ENCODE measurements at regions of chr11 and their contacts with region 1.

Region 1: DNA sequence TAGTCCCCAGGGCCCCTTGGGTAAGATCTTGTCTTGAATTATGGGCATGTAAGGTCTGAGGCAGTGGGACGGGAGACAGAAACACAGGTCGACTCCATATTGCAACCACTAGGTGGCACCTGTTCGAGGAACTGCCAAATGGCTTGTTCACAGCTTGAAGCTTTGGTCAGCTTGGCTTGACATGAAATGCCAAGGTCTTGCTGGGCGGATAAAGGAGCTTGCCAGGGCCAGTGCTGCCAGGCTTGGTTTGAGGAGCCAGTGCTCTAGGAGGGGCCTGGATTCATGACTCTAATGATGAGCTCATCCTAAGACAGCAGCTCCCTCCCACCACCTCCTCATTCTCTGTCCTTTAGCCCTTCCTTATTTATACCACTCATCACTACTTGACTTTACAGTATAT is 11.9 kb upstream of the NRIP3 start:
- DNase-seq: peak; percentile 50 to 64
- H3K4me3 ChIP-seq: no peak overlapping the region
- H3K27ac ChIP-seq: no peak overlapping the region
- H3K4me1 ChIP-seq: no peaks in the 10 kb centered on the region
- H3K27me3 ChIP-seq: no peaks in the 10 kb centered on the region
- CTCF ChIP-seq: peak; percentile 87 to 96 (median 90)
- EP300 ChIP-seq: no peak
- POLR2A ChIP-seq: no peak
- RAD21 ChIP-seq: peak; percentile 79 to 88

Region 2: GRCh38 chr11:8799273-8799672 is 216.4 kb before region 1 on chr11:
- CTCF ChIA-PET with region 1: no interaction called
- POLR2A ChIA-PET with region 1: no interaction called
- DNase-seq: no peak
- H3K4me3 ChIP-seq: no peak overlapping the region
- H3K27ac ChIP-seq: no peak overlapping the region
- H3K4me1 ChIP-seq: peaks cover 0 to 4% (median 0%) of the 10 kb centered on the region in 4 experiments; a peak in 3 of 7 replicates
- H3K27me3 ChIP-seq: no peaks in the 10 kb centered on the region
- CTCF ChIP-seq: no peak
- EP300 ChIP-seq: no peak
- POLR2A ChIP-seq: no peak
- RAD21 ChIP-seq: no peak

Region 3: DNA sequence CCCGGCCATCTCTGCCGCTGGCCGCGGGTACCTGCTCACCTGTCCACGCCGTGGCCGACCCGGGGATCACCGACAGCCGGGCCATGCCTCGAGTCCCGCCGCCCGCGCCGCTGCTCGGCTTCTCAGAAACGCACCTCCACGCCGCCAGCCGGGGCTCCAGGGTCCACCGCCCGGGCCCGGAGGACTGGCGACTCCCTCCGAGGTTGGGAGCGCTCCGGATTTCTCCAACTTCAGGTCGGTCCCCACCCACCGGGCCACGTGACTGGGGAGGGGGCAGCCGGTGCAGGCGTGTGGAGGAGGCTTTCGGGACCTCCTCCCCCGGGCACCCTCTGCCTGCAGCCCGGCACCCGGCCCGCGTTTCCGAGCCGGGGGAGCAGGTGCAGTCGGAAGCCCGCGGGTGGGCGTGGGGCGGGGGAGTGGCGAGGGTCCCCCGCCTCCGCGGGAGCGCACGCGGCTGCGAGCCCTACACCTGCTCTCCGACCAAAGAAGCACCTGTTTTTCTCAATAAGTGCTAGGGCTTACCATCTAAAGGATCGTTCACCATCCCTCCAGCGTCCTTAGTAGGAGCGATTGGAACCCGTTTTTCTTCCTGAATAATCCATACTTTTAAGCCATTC is 11.3 kb before region 1 on chr11:
- CTCF ChIA-PET with region 1: interaction called, 26 read pairs
- POLR2A ChIA-PET with region 1: interaction called, 5 read pairs
- DNase-seq: peak in 1 of 2 experiments; percentile 81
- H3K4me3 ChIP-seq: peak overlapping the region; percentile 45 to 67 (median 48)
- H3K27ac ChIP-seq: no peak overlapping the region
- H3K4me1 ChIP-seq: peaks cover 0 to 8% (median 6%) of the 10 kb centered on the region in 4 experiments; a peak in 6 of 7 replicates
- H3K27me3 ChIP-seq: peaks cover 20 to 57% (median 50%) of the 10 kb centered on the region in 4 experiments
- CTCF ChIP-seq: no peak
- EP300 ChIP-seq: no peak
- POLR2A ChIP-seq: no peak
- RAD21 ChIP-seq: no peak

Region 4: GRCh38 chr11:9042488-9042887 is 26.8 kb after region 1 on chr11:
- CTCF ChIA-PET with region 1: interaction called, 15 read pairs
- POLR2A ChIA-PET with region 1: no interaction called
- DNase-seq: no peak
- H3K4me3 ChIP-seq: no peak overlapping the region
- H3K27ac ChIP-seq: no peak overlapping the region
- H3K4me1 ChIP-seq: peaks cover 0 to 9% (median 2%) of the 10 kb centered on the region in 4 experiments; a peak in 5 of 7 replicates
- H3K27me3 ChIP-seq: no peaks in the 10 kb centered on the region
- CTCF ChIP-seq: no peak
- EP300 ChIP-seq: no peak
- POLR2A ChIP-seq: no peak
- RAD21 ChIP-seq: no peak

Region 5: DNA sequence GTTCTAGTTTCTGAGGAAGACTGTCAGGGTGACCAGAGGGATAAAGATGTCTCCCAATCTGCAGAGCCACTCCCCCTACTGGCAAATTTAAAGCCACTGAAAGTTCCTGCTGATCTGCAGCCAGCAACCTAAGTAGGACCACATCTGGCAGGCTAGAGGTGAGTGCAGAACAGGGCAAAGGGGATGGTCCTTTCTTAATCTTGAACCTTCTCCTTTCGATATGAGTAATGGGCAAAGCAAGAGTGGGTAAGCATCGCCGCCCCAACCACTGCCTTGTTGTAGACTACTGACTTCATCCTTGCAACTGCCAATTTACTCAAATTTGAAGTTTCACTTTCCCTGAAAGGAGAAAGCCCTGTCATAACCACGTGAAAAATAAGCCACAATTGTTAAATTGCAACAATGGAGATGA is 45.0 kb after region 1 on chr11:
- CTCF ChIA-PET with region 1: interaction called, 43 read pairs
- POLR2A ChIA-PET with region 1: no interaction called
- DNase-seq: no peak
- H3K4me3 ChIP-seq: no peak overlapping the region
- H3K27ac ChIP-seq: no peak overlapping the region
- H3K4me1 ChIP-seq: no peaks in the 10 kb centered on the region
- H3K27me3 ChIP-seq: no peaks in the 10 kb centered on the region
- CTCF ChIP-seq: peak; percentile 47 to 71 (median 61)
- EP300 ChIP-seq: no peak
- POLR2A ChIP-seq: no peak
- RAD21 ChIP-seq: peak; percentile 54 to 69

Region 6: DNA sequence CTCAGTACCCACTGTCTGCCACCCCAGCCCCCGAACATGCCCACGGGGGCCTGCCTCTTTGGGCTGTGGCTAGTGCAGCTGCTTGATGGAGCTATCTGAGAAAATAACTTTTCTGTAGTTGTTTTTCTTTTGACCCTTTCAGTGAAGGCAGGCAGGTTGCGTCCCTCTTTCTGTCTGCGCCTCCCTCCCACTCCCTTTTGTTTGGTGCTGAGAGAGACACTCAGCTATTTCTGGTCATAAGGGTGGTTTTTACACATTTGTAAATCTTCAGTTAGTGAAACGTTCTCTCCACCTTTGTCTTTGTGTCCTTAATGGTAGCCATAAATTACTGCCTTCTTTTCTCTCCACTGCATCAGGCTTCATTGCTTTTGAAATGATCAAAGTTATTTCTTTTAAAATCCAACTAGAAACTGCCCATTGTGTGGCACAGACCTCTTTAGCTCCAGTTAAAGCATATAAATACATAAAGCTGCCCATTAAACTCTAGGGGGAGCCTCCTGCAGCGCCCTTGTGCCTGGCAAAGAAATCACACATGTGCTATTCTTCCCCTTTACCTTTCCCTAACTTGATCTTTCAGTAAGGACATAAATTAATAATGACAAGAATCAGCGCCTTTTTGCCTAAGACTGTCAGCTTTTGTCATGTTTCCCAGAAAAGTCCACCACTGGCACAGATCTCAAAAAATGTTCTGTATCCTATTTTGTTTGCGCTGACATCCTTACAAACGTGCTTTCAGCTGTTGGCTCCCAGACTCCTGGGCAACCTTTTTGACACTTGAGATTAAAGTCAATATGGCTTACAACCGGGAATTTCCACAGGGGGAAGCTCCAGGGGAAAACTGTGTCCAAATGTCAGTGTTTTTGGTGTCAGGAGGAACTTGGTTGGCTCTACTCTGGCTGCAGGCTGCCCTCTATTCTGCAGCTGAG is 77.4 kb after region 1 on chr11:
- CTCF ChIA-PET with region 1: interaction called, 78 read pairs
- POLR2A ChIA-PET with region 1: interaction called, 4 read pairs
- DNase-seq: no peak
- H3K4me3 ChIP-seq: no peak overlapping the region
- H3K27ac ChIP-seq: no peak overlapping the region
- H3K4me1 ChIP-seq: peaks cover 1 to 4% (median 3%) of the 10 kb centered on the region in 4 experiments; a peak in 5 of 7 replicates
- H3K27me3 ChIP-seq: peaks cover 11 to 36% (median 30%) of the 10 kb centered on the region in 4 experiments
- CTCF ChIP-seq: peak in 2 of 3 experiments; percentile 8 to 10; a peak in 1 of 4 replicates
- EP300 ChIP-seq: no peak
- POLR2A ChIP-seq: no peak
- RAD21 ChIP-seq: no peak

Region 7: DNA sequence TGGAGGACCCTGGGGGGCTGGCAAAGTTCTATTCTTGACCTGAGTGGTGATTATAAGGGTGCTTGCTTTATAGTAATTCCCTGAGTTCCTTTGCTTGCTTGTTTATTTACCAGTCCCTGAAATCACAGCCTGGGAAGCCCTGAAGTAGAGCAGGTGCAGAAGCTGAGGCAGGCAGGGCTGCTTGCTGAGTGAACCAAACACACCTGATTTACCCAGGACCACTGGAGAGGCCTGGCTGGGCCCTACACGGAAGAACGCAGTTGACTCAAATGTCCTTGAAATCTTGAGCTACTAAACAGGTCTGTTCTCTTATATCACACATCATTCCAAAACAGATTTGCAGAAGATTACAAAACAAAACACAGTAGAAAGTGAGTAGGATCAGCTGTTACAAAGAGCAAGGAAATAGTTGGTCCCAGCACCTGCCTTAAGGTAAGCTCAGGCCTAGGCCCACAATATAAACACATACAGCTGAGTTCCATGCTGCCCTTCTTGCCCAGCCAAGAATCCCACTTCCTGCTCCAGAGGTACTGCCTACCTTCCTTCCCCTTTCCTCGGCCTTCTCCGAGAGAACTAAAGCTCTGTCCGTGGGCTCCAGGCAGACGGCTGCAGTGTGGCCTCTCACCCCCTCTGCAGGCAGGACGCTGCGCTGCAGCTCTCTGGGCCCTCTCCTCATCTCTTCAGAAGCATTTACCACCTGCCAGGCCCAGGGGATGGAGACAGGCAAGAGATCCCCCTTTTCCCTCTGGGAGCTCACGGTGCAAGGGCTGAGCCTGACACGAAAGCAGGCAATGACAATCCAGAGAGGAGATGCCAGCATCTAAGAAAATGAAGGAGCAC is 121.8 kb after region 1 on chr11:
- CTCF ChIA-PET with region 1: interaction called, 36 read pairs
- POLR2A ChIA-PET with region 1: interaction called, 3 read pairs
- DNase-seq: peak; percentile 73 to 95
- H3K4me3 ChIP-seq: no peak overlapping the region
- H3K27ac ChIP-seq: no peak overlapping the region
- H3K4me1 ChIP-seq: peaks cover 0 to 12% (median 2%) of the 10 kb centered on the region in 4 experiments; a peak in 3 of 7 replicates
- H3K27me3 ChIP-seq: no peaks in the 10 kb centered on the region
- CTCF ChIP-seq: peak; percentile 94 to 99 (median 96)
- EP300 ChIP-seq: no peak
- POLR2A ChIP-seq: no peak
- RAD21 ChIP-seq: peak; percentile 93 to 95

Measured in H1 (cell line).